ENCODE measurements at regions of chr16 and their contacts with region 1.

Region 1: DNA sequence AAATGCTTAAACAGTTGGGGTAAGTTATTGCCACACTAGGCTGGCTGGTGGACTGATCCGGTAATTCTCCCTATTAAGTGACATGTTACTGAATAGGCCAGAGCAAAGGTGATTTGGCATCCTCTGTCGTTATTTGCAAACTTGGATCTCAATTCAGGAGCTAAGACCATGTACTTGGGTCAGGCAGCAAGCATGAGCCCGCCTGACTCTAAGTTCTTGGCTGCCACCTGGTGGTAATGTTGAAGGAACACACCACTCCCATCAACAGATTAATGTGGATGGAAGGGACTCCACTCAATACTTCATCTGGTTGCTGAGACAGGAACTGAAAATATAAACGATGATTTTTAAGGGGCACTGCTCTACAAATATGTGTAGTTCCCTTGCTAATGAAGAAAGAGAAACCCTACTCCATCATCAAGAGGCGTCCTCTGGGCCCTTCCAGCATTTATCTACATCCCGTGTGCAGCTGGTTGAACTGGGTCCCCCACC is 70.8 kb downstream of the EMP2 start:
- DNase-seq: no peak
- H3K4me3 ChIP-seq: no peak overlapping the region
- H3K27ac ChIP-seq: no peak overlapping the region
- H3K4me1 ChIP-seq: peaks cover 4 to 6% of the 10 kb centered on the region in 2 donors
- H3K27me3 ChIP-seq: no peaks in the 10 kb centered on the region
- CTCF ChIP-seq: peak; percentile 63 to 79 (median 72)

Region 2: GRCh38 chr16:10256784-10257641 is 252.6 kb before region 1 on chr16:
- intact Hi-C with region 1: loop called (anchors 1 kb)
- DNase-seq: no peak
- H3K4me3 ChIP-seq: no peak overlapping the region
- H3K27ac ChIP-seq: no peak overlapping the region
- H3K4me1 ChIP-seq: no peaks in the 10 kb centered on the region
- H3K27me3 ChIP-seq: no peaks in the 10 kb centered on the region
- CTCF ChIP-seq: peak; percentile 38 to 85 (median 77)

Region 3: DNA sequence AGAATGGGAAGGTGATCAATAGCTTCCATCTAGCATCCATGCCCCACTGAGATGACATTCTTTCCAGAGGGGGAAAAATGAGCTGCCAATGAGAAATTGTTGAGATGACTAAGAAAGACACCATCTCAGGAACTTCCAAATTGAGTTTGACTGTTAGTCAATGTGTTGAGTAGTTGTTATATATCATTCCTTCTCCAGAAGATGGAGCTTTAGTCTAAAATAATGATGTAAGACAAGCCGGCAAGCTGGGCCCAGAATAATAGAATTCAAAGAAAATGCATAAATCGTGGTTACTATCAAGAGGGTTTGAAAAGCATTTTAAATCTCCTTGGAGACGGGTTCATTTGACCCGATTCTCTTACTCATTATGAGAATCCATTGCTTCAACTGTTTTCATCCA is 194.8 kb before region 1 on chr16:
- intact Hi-C with region 1: loop called (anchors 5 kb)
- DNase-seq: no peak
- H3K4me3 ChIP-seq: no peak overlapping the region
- H3K27ac ChIP-seq: no peak overlapping the region
- H3K4me1 ChIP-seq: no peaks in the 10 kb centered on the region
- H3K27me3 ChIP-seq: no peaks in the 10 kb centered on the region
- CTCF ChIP-seq: peak in 1 of 3 experiments; percentile 15

Region 4: GRCh38 chr16:10362077-10362863 is 147.3 kb before region 1 on chr16:
- intact Hi-C with region 1: no loop called
- DNase-seq: no peak
- H3K4me3 ChIP-seq: no peak overlapping the region
- H3K27ac ChIP-seq: no peak overlapping the region
- H3K4me1 ChIP-seq: no peaks in the 10 kb centered on the region
- H3K27me3 ChIP-seq: no peaks in the 10 kb centered on the region
- CTCF ChIP-seq: no peak

Region 5: DNA sequence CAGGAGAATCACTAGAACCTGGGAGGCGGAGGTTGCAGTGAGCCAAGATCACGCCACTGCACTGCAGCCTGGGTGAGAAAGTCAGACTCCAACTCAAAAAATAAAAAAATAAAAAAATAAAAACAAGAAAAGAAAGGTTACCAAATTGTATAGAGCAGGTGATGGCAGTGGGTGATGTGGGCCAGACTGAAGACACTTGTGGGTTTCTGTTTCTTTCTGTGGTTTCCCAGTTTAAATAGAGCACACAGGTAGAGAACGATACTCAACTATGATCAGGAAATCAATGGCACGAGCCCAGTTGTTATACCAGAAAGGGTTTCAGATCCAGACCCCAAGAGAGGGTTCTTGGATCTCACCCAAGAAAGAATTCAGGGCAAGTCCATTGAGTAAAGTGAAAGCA is 266.7 kb after region 1 on chr16:
- intact Hi-C with region 1: no loop called
- DNase-seq: no peak
- H3K4me3 ChIP-seq: no peak overlapping the region
- H3K27ac ChIP-seq: no peak overlapping the region
- H3K4me1 ChIP-seq: no peaks in the 10 kb centered on the region
- H3K27me3 ChIP-seq: no peaks in the 10 kb centered on the region
- CTCF ChIP-seq: no peak